K562 (cell line): ENCODE measurements at regions of chr7 and their contacts with region 1.

Region 1: GRCh38 chr7:50534690-50535290 is 30.4 kb downstream of the DDC start:
- DNase-seq: peak; percentile 84 to 93 (median 88)
- ATAC-seq: peak; percentile 95
- H3K4me3 ChIP-seq: no peak overlapping the region
- H3K27ac ChIP-seq: peak overlapping the region; percentile 77
- H3K4me1 ChIP-seq: peaks cover 21 to 23% of the 10 kb centered on the region in 2 experiments
- H3K27me3 ChIP-seq: peaks cover 0 to 14% of the 10 kb centered on the region in 2 experiments; a peak in 2 of 5 replicates
- CTCF ChIP-seq: peak; percentile 45 to 56 (median 46)
- EP300 ChIP-seq: peak; percentile 84
- POLR2A ChIP-seq: peak; percentile 57
- RAD21 ChIP-seq: peak; percentile 20 to 37; a peak in 3 of 4 replicates

Region 2: DNA sequence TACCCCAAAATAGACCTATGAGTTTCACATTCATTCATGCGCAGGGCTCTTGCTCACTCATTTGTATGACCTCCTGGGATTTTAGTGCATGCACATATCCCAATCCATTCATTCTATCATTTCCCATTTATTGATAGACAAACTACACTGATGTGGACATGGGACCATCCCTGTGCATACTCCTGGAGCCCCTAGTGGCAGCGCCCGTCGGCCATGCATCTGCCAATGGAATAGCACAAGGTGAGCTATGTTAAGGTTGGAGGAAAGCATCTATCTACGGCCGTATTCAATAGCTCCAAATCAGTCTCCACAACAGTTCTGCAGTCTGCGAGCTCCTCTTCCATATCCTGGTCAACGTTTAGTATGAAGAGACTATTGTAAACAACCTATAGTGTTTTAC is 52.9 kb before region 1 on chr7:
- CTCF ChIA-PET with region 1: no interaction called
- POLR2A ChIA-PET with region 1: no interaction called
- in situ Hi-C with region 1: no loop called
- intact Hi-C with region 1: loop called (anchors 2 kb)
- DNase-seq: peak in 1 of 4 experiments; percentile 12
- ATAC-seq: peak; percentile 68
- H3K4me3 ChIP-seq: no peak overlapping the region
- H3K27ac ChIP-seq: no peak overlapping the region
- H3K4me1 ChIP-seq: peaks cover 0 to 6% of the 10 kb centered on the region in 2 experiments; a peak in 2 of 5 replicates
- H3K27me3 ChIP-seq: peaks cover 0 to 3% of the 10 kb centered on the region in 2 experiments; a peak in 1 of 5 replicates
- CTCF ChIP-seq: peak in 2 of 3 experiments; percentile 19 to 40; a peak in 2 of 6 replicates
- EP300 ChIP-seq: no peak
- POLR2A ChIP-seq: no peak
- RAD21 ChIP-seq: no peak